ENCODE measurements at regions of chr9 and their contacts with region 1.

Region 1: GRCh38 chr9:75890472-75891276 is at the start of gene PCSK5:
- DNase-seq: peak; percentile 65 to 94 (median 90)
- ATAC-seq: peak; percentile 95
- H3K4me3 ChIP-seq: peak within 1 kb of the TSS; percentile 70
- H3K4me3 Mint-ChIP-seq: peak within 1 kb of the TSS; percentile 91 to 99 (median 97)
- H3K27ac ChIP-seq: peak within 1 kb of the TSS; percentile 77
- H3K27ac Mint-ChIP-seq: peak within 1 kb of the TSS; percentile 81 to 95 (median 90)
- H3K4me1 ChIP-seq: peaks cover 0 to 15% of the 10 kb centered on the region in 2 donors
- H3K4me1 Mint-ChIP-seq: peaks cover 35 to 59% (median 49%) of the 10 kb centered on the region in 7 donors
- H3K27me3 ChIP-seq: no peaks in the 10 kb centered on the region
- H3K27me3 Mint-ChIP-seq: peaks cover 0 to 50% (median 0%) of the 10 kb centered on the region in 5 donors
- total RNA-seq, gene PCSK5: 5.2 to 35.0 (median 24.6) TPM

Region 2: GRCh38 chr9:75027187-75028107 is 863.2 kb before region 1 on chr9:
- CTCF ChIA-PET with region 1: no interaction called
- POLR2A ChIA-PET with region 1: interaction called, 4 read pairs
- intact Hi-C with region 1: loop called (anchors 1 to 2 kb)
- DNase-seq: peak in 8 of 9 donors; percentile 27 to 66 (median 35)
- ATAC-seq: peak; percentile 18
- H3K4me3 ChIP-seq: peak overlapping the region; percentile 69
- H3K4me3 Mint-ChIP-seq: peak overlapping the region; percentile 80 to 98 (median 96)
- H3K27ac ChIP-seq: peak overlapping the region; percentile 90
- H3K27ac Mint-ChIP-seq: peak overlapping the region; percentile 84 to 98 (median 95)
- H3K4me1 ChIP-seq: peaks cover 34 to 42% of the 10 kb centered on the region in 2 donors
- H3K4me1 Mint-ChIP-seq: peaks cover 30 to 54% (median 48%) of the 10 kb centered on the region in 7 donors
- H3K27me3 ChIP-seq: no peaks in the 10 kb centered on the region
- H3K27me3 Mint-ChIP-seq: peaks cover 0 to 3% (median 0%) of the 10 kb centered on the region in 5 donors

Region 3: DNA sequence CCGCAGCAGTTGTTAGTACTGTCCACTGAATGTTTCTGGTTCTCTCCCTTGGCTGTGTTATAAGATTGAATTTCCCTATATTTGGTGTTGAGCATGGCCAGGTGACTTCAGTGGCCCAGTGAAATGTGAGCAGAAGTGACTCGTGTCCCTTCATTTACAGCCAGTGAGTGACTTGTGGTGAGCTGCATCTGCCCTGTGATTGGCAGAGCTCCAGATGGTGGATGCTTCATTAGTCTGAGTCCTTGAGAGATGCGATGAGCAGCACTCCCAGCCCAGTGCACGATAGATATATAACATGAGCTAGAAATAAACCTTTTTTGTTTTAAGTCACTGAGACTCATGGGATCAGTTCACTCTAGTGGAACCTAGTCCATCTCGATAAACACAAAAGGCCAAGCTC is 19.1 kb after region 1 on chr9:
- CTCF ChIA-PET with region 1: interaction called, 4 read pairs
- POLR2A ChIA-PET with region 1: interaction called, 3 read pairs
- intact Hi-C with region 1: loop called in 1 of 2 experiments (anchors 2 kb)
- DNase-seq: no peak
- ATAC-seq: no peak
- H3K4me3 ChIP-seq: no peak overlapping the region
- H3K4me3 Mint-ChIP-seq: peak overlapping the region in 5 of 10 donors; percentile 4 to 48 (median 14)
- H3K27ac ChIP-seq: no peak overlapping the region
- H3K27ac Mint-ChIP-seq: no peak overlapping the region
- H3K4me1 ChIP-seq: peaks cover 0 to 15% of the 10 kb centered on the region in 2 donors
- H3K4me1 Mint-ChIP-seq: peaks cover 0 to 95% (median 78%) of the 10 kb centered on the region in 7 donors
- H3K27me3 ChIP-seq: no peaks in the 10 kb centered on the region
- H3K27me3 Mint-ChIP-seq: no peaks in the 10 kb centered on the region

Region 4: GRCh38 chr9:76023715-76024195 is 133.1 kb after region 1 on chr9:
- CTCF ChIA-PET with region 1: no interaction called
- POLR2A ChIA-PET with region 1: interaction called, 5 read pairs
- intact Hi-C with region 1: loop called (anchors 1 kb)
- DNase-seq: peak in 7 of 9 donors; percentile 69 to 87 (median 81)
- ATAC-seq: peak; percentile 93
- H3K4me3 ChIP-seq: peak overlapping the region; percentile 38
- H3K4me3 Mint-ChIP-seq: peak overlapping the region; percentile 68 to 86 (median 80)
- H3K27ac ChIP-seq: peak overlapping the region; percentile 76
- H3K27ac Mint-ChIP-seq: peak overlapping the region; percentile 77 to 99 (median 96)
- H3K4me1 ChIP-seq: peaks cover 10 to 96% of the 10 kb centered on the region in 2 donors
- H3K4me1 Mint-ChIP-seq: peaks cover 59 to 100% (median 98%) of the 10 kb centered on the region in 7 donors
- H3K27me3 ChIP-seq: no peaks in the 10 kb centered on the region
- H3K27me3 Mint-ChIP-seq: no peaks in the 10 kb centered on the region

Region 5: GRCh38 chr9:76302947-76303940 is 412.6 kb after region 1 on chr9:
- CTCF ChIA-PET with region 1: no interaction called
- POLR2A ChIA-PET with region 1: no interaction called
- intact Hi-C with region 1: loop called (anchors 2 kb)
- DNase-seq: peak in 6 of 9 donors; percentile 28 to 60 (median 54)
- ATAC-seq: peak; percentile 75
- H3K4me3 ChIP-seq: no peak overlapping the region
- H3K4me3 Mint-ChIP-seq: no peak overlapping the region
- H3K27ac ChIP-seq: no peak overlapping the region
- H3K27ac Mint-ChIP-seq: no peak overlapping the region
- H3K4me1 ChIP-seq: no peaks in the 10 kb centered on the region
- H3K4me1 Mint-ChIP-seq: peaks cover 0 to 3% (median 0%) of the 10 kb centered on the region in 7 donors
- H3K27me3 ChIP-seq: no peaks in the 10 kb centered on the region
- H3K27me3 Mint-ChIP-seq: peaks cover 0 to 17% (median 7%) of the 10 kb centered on the region in 5 donors

Region 6: GRCh38 chr9:77092536-77092935 is 1201.9 kb after region 1 on chr9:
- CTCF ChIA-PET with region 1: no interaction called
- POLR2A ChIA-PET with region 1: no interaction called
- intact Hi-C with region 1: no loop called
- DNase-seq: no peak
- ATAC-seq: no peak
- H3K4me3 ChIP-seq: no peak overlapping the region
- H3K4me3 Mint-ChIP-seq: no peak overlapping the region
- H3K27ac ChIP-seq: no peak overlapping the region
- H3K27ac Mint-ChIP-seq: no peak overlapping the region
- H3K4me1 ChIP-seq: no peaks in the 10 kb centered on the region
- H3K4me1 Mint-ChIP-seq: no peaks in the 10 kb centered on the region
- H3K27me3 ChIP-seq: no peaks in the 10 kb centered on the region
- H3K27me3 Mint-ChIP-seq: peaks cover 0 to 21% (median 16%) of the 10 kb centered on the region in 5 donors

Region 7: DNA sequence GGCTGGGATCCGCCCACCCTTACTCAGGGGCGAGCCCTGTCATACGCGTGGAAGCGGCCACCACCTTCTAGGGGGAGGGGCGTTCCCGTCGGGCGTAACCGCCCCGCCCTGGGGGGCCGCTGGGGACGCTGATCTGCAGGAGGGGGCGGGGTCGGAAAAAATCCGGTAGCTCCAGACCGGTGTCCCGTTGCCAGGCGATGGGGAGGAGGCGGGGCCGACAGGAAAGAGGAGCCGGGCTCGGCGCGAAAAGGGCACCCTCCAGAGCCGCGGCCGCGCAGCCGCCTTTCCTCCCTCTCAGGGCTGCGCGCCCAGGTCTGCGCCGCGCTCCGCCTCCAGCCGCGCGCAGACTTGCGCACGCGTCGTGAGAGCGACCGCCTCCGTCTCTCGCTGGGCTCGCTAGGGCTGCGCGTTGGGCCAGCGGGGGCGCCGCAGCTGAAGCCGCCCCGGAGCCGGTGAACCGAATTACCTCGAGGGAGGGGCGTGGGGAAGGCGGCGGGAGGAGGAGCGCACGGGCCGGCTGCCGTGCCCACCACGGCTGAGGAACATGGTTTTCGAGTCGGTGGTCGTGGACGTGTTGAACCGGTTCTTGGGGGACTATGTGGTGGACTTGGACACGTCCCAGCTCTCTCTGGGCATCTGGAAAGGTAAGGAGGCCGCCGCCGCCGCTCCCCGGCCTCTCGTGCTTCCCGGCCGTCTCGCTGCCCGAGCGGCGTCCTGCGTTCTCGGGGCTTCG is 1286.7 kb after region 1 on chr9 and contains the start of gene VPS13A:
- CTCF ChIA-PET with region 1: no interaction called
- POLR2A ChIA-PET with region 1: no interaction called
- intact Hi-C with region 1: loop called (anchors 2 kb)
- DNase-seq: peak; percentile 78 to 92 (median 87)
- ATAC-seq: peak; percentile 92
- H3K4me3 ChIP-seq: peak within 1 kb of the TSS; percentile 89
- H3K4me3 Mint-ChIP-seq: peak within 1 kb of the TSS; percentile 90 to 98 (median 96)
- H3K27ac ChIP-seq: peak within 1 kb of the TSS; percentile 86
- H3K27ac Mint-ChIP-seq: peak within 1 kb of the TSS; percentile 76 to 96 (median 90)
- H3K4me1 ChIP-seq: peaks cover 5 to 17% of the 10 kb centered on the region in 2 donors
- H3K4me1 Mint-ChIP-seq: peaks cover 12 to 39% (median 30%) of the 10 kb centered on the region in 7 donors
- H3K27me3 ChIP-seq: no peaks in the 10 kb centered on the region
- H3K27me3 Mint-ChIP-seq: peaks cover 0 to 20% (median 0%) of the 10 kb centered on the region in 5 donors
- total RNA-seq, gene VPS13A: 37.1 to 52.8 (median 42.6) TPM

Measured in naive thymus-derived CD4-positive, alpha-beta T cell (primary cell).